GM12878 (cell line): ENCODE measurements at regions of chr13 and their contacts with region 1.

Region 1: GRCh38 chr13:27424246-27425157 is at the start of gene GTF3A:
- DNase-seq: peak; percentile 71
- ATAC-seq: peak; percentile 83
- H3K4me3 ChIP-seq: peak within 1 kb of the TSS; percentile 68
- H3K27ac ChIP-seq: peak within 1 kb of the TSS; percentile 81
- H3K4me1 ChIP-seq: peaks cover 12% of the 10 kb centered on the region
- H3K27me3 ChIP-seq: no peaks in the 10 kb centered on the region
- CTCF ChIP-seq: no peak
- EP300 ChIP-seq: no peak
- POLR2A ChIP-seq: peak; percentile 91
- RAD21 ChIP-seq: no peak
- polyA plus RNA-seq, gene GTF3A: 74.2 to 187 TPM

Region 2: DNA sequence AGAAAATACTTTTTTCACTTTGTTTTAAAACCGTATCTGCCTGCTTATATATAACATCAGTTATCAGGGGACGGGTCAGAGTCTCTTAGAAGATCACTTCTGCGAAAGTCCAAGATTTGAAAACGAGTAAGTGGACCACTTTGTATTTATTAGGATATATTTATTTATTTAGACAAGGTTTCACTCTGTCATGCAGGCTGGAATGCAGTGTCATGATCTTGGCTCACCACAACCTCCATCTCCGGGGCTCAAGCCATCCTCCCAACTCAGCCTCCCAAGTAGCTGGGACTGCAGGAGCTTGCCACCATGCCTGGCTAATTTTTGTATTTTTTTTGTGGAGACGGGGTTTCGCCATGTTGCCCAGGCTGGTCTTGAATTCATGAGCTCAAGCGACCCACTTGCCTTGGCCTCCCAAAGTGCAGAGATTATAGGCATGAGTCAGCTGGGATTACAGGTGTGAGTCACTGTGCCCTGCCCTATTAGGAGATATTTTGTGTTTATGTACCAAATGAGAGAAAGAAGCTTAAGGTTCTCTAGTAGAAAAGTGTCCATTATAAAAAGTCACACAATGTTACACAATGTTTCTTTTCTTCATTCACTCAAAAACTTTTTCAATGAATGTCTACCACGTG is 114.4 kb before region 1 on chr13:
- CTCF ChIA-PET with region 1: no interaction called
- POLR2A ChIA-PET with region 1: no interaction called
- RAD21 ChIA-PET with region 1: no interaction called
- SMC1A ChIA-PET with region 1: no interaction called
- in situ Hi-C with region 1: no loop called
- intact Hi-C with region 1: no loop called
- DNase-seq: no peak
- ATAC-seq: no peak
- H3K4me3 ChIP-seq: no peak overlapping the region
- H3K27ac ChIP-seq: no peak overlapping the region
- H3K4me1 ChIP-seq: no peaks in the 10 kb centered on the region
- H3K27me3 ChIP-seq: no peaks in the 10 kb centered on the region; a peak in 1 of 4 replicates
- CTCF ChIP-seq: no peak
- EP300 ChIP-seq: no peak
- POLR2A ChIP-seq: no peak
- RAD21 ChIP-seq: no peak

Region 3: GRCh38 chr13:27372896-27373295 is 51.6 kb before region 1 on chr13:
- CTCF ChIA-PET with region 1: no interaction called
- POLR2A ChIA-PET with region 1: no interaction called
- RAD21 ChIA-PET with region 1: no interaction called
- SMC1A ChIA-PET with region 1: no interaction called
- in situ Hi-C with region 1: no loop called
- intact Hi-C with region 1: no loop called
- DNase-seq: no peak
- ATAC-seq: no peak
- H3K4me3 ChIP-seq: no peak overlapping the region
- H3K27ac ChIP-seq: no peak overlapping the region
- H3K4me1 ChIP-seq: no peaks in the 10 kb centered on the region
- H3K27me3 ChIP-seq: no peaks in the 10 kb centered on the region
- CTCF ChIP-seq: no peak
- EP300 ChIP-seq: no peak
- POLR2A ChIP-seq: no peak
- RAD21 ChIP-seq: no peak

Region 4: DNA sequence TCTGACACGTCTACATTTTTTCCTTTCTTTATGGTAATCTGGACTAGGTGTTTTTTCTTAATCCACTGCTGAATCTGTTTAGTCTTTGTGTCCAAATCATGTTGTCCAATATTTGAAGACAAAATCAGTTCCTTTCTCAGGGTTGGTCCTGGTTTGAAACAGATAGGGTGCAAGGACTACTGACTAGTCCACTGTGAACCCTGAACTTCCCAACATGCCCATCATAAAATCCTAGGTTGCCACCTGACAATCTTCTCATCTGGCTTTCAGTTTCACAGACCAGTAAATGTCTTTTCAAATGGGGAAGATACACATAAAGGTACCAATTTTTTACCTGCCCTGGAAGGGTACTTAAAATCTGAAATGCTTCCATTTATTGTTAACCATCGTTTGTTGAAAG is 12.6 kb after region 1 on chr13:
- CTCF ChIA-PET with region 1: interaction called, 5 read pairs
- POLR2A ChIA-PET with region 1: interaction called, 9 read pairs
- RAD21 ChIA-PET with region 1: interaction called, 6 read pairs
- SMC1A ChIA-PET with region 1: interaction called, 11 read pairs
- in situ Hi-C with region 1: no loop called
- intact Hi-C with region 1: no loop called
- DNase-seq: no peak
- ATAC-seq: no peak
- H3K4me3 ChIP-seq: no peak overlapping the region
- H3K27ac ChIP-seq: no peak overlapping the region
- H3K4me1 ChIP-seq: peaks cover under 1% of the 10 kb centered on the region; the same call in 1 of the 2 replicates
- H3K27me3 ChIP-seq: no peaks in the 10 kb centered on the region
- CTCF ChIP-seq: no peak
- EP300 ChIP-seq: no peak
- POLR2A ChIP-seq: no peak
- RAD21 ChIP-seq: no peak

Region 5: DNA sequence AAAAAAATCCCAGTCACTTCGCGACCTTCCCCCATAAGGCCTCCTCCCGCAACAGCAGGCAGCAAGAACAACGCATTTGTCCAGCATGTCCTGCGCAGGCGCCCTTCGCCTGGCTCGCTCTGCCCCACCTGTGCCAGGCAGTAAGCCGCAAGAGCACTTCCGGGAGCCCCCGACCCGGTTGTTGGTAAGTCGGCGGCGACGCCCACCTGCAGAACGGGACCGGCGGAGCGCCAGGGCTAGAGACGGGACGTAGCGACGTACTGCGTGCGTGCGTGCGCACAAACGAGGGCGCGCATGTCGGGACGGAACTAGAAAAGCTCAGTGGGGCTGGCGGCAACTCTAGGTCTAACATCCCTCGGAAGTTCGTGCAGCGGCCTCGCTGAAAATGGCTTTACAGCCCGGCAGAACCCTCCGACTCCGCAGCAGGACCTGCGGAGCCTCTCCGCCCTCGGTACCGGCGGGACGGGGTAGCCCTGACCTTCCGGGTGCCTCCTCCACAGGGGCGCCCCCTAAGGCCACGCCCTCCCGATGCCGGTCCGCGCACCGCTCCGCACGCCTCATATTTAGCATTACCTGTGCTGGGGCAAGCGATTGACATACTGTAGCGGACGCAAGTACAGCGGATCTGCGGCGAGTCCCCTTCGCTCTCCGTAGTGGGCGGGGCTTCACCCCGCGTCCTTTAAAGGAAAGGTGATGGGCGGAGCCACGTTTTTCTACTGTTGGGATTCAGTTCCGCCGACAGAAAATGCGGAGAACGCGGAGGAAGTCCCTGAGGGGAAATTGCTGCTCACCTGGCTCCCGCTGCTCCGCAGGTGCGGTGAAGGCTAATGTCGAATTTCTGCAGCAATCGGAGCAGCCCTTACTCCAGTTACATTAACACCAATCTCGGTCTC is 25.7 kb after region 1 on chr13 and contains the start of gene MTIF3:
- CTCF ChIA-PET with region 1: interaction called, 30 read pairs
- POLR2A ChIA-PET with region 1: interaction called, 16 read pairs
- RAD21 ChIA-PET with region 1: interaction called, 32 read pairs
- SMC1A ChIA-PET with region 1: interaction called, 41 read pairs
- in situ Hi-C with region 1: no loop called
- intact Hi-C with region 1: loop called (anchors 1 kb)
- DNase-seq: peak; percentile 87
- ATAC-seq: peak; percentile 93
- H3K4me3 ChIP-seq: peak within 1 kb of the TSS; percentile 87
- H3K27ac ChIP-seq: peak within 1 kb of the TSS; percentile 86
- H3K4me1 ChIP-seq: peaks cover 11% of the 10 kb centered on the region
- H3K27me3 ChIP-seq: no peaks in the 10 kb centered on the region
- CTCF ChIP-seq: no peak
- EP300 ChIP-seq: no peak
- POLR2A ChIP-seq: peak; percentile 98
- RAD21 ChIP-seq: 0 out of 2 replicates have a peak, but pooled peaks have one; percentile 16
- polyA plus RNA-seq, gene MTIF3: 64.7 to 73.9 TPM

Region 6: DNA sequence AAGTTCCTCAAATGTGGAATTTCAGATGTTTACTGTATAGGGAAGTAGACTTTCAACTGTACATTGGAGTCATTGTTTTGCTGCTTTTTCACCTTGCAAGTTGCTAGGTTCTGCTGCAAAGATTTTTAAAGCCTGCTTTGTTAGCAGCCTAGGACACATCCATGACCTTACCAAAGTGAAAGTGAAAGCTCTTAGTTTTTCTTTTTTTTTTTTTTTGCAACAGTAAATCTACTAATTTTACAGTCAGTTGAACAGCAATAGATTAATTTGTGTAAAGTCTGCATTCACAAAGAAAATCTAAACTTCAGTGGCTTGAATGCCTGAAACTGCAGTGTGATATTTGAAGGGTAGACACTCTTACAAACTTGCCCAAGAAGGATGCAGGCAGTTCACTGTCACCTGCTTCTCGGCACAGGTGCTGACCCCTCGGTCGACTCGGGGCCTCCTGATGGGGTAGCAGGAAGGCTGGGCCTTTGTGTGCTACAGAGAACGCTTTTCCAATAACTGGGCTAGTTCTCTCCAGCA is 30.9 kb after region 1 on chr13:
- CTCF ChIA-PET with region 1: interaction called, 30 read pairs
- POLR2A ChIA-PET with region 1: interaction called, 16 read pairs
- RAD21 ChIA-PET with region 1: interaction called, 32 read pairs
- SMC1A ChIA-PET with region 1: interaction called, 41 read pairs
- in situ Hi-C with region 1: no loop called
- intact Hi-C with region 1: loop called (anchors 1 kb)
- DNase-seq: no peak
- ATAC-seq: peak; percentile 32; the same call in 2 of the 3 replicates
- H3K4me3 ChIP-seq: peak overlapping the region; percentile 38; the same call in 1 of the 2 replicates
- H3K27ac ChIP-seq: peak overlapping the region; percentile 70
- H3K4me1 ChIP-seq: peaks cover 10% of the 10 kb centered on the region
- H3K27me3 ChIP-seq: no peaks in the 10 kb centered on the region
- CTCF ChIP-seq: no peak
- EP300 ChIP-seq: no peak
- POLR2A ChIP-seq: peak; percentile 50; the same call in 1 of the 2 replicates
- RAD21 ChIP-seq: no peak